ENCODE measurements at regions of chr22 and their contacts with region 1.

Region 1: GRCh38 chr22:41666661-41667258 is 21.9 kb downstream of the SNU13 start:
- DNase-seq: peak; percentile 95
- H3K4me3 ChIP-seq: peak overlapping the region; percentile 42
- H3K27ac ChIP-seq: peak overlapping the region; percentile 91
- H3K4me1 ChIP-seq: no peaks in the 10 kb centered on the region
- H3K27me3 ChIP-seq: no peaks in the 10 kb centered on the region
- CTCF ChIP-seq: peak; percentile 99

Region 2: GRCh38 chr22:41512421-41513194 is 154.2 kb before region 1 on chr22:
- CTCF ChIA-PET with region 1: no interaction called
- POLR2A ChIA-PET with region 1: no interaction called
- intact Hi-C with region 1: no loop called
- DNase-seq: peak; percentile 84
- H3K4me3 ChIP-seq: no peak overlapping the region
- H3K27ac ChIP-seq: peak overlapping the region; percentile 79
- H3K4me1 ChIP-seq: peaks cover 21% of the 10 kb centered on the region
- H3K27me3 ChIP-seq: no peaks in the 10 kb centered on the region
- CTCF ChIP-seq: no peak

Region 3: GRCh38 chr22:41589391-41590241 is 77.1 kb before region 1 on chr22 and contains the start of gene PMM1:
- CTCF ChIA-PET with region 1: interaction called, 10 read pairs
- POLR2A ChIA-PET with region 1: interaction called, 3 read pairs
- intact Hi-C with region 1: no loop called
- DNase-seq: peak; percentile 100
- H3K4me3 ChIP-seq: peak within 1 kb of the TSS; percentile 95
- H3K27ac ChIP-seq: peak within 1 kb of the TSS; percentile 83
- H3K4me1 ChIP-seq: peaks cover 3% of the 10 kb centered on the region
- H3K27me3 ChIP-seq: no peaks in the 10 kb centered on the region
- CTCF ChIP-seq: no peak
- total RNA-seq, gene PMM1: 26.8 and 30.5 TPM in 2 replicates

Region 4: DNA sequence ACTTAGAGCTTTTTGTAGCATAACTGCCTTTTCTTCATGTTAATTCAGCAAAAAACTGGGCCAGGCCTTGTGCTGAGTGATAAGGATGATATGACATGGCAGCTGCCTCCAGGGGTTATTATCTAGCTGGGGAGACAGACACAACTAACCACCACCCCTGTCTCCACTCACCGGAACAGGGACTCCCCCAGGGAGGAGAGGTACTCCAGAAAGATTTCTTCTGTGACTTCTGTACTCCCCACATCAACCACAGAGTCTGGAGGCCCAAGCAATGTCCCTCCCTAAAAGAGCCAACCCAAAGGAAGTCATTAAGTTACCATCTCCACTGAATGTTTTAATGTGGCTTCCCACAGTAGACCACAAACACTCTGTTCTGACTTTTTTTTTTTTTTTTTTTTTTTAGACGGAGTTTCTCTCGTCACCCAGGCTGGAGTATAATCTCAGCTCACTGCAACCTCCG is 62.9 kb before region 1 on chr22:
- CTCF ChIA-PET with region 1: interaction called, 13 read pairs
- POLR2A ChIA-PET with region 1: no interaction called
- intact Hi-C with region 1: no loop called
- DNase-seq: no peak
- H3K4me3 ChIP-seq: no peak overlapping the region
- H3K27ac ChIP-seq: no peak overlapping the region
- H3K4me1 ChIP-seq: no peaks in the 10 kb centered on the region
- H3K27me3 ChIP-seq: no peaks in the 10 kb centered on the region
- CTCF ChIP-seq: no peak

Region 5: GRCh38 chr22:41688365-41689211 is 21.8 kb after region 1 on chr22 and contains the start of gene SNU13:
- CTCF ChIA-PET with region 1: interaction called, 6 read pairs
- POLR2A ChIA-PET with region 1: interaction called, 16 read pairs
- intact Hi-C with region 1: no loop called
- DNase-seq: peak; percentile 97
- H3K4me3 ChIP-seq: peak within 1 kb of the TSS; percentile 69
- H3K27ac ChIP-seq: peak within 1 kb of the TSS; percentile 93
- H3K4me1 ChIP-seq: peaks cover 5% of the 10 kb centered on the region
- H3K27me3 ChIP-seq: no peaks in the 10 kb centered on the region
- CTCF ChIP-seq: no peak
- total RNA-seq, gene SNU13: 216 and 223 TPM in 2 replicates

Measured in A673 (cell line).